Dorsolateral prefrontal cortex (tissue), 120 donors: ENCODE measurements at regions of chr13 and their contacts with region 1.

Region 1: DNA sequence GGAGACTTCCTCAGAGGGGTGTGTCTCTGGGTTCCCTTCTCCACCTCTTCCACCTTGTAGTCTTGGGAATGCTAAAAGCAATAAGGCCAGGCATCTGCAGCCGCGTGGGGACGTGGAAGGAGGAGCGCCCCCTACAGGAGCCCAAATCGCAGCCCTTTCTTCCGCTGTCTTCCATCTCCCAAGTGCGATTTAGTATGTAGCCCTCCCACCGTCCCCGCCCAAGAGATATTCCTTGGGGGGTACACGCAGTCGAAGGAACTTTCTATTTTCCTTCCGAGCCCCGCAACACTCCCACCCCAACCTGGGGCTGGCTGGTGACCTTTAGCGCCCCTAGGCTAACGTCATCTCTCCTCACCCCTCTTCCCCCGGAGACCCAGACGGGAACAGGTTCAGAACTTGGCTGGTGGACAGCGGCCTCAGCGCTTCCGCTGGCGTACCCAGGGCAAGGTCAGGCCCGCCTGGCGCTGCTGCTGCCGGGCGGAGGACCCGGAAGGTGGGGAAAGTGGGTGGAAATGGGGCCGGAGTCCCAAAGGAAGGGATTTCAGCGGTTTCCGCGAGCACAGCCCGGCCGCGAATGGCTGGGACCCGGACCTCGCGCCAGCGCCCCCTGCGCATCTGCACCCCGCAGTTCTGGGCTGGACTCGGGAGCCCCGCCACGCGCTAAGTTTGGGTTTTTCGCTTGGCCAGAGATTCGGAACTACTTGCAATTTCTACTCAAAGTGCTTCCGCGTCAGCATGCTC is 2.1 kb upstream of the PCDH8 start:
- DNase-seq: peak in 6 of 10 donors; percentile 42 to 79 (median 52)
- H3K4me3 ChIP-seq: peak overlapping the region; percentile 50 to 87 (median 66)
- H3K27ac ChIP-seq: peak overlapping the region in 53 of 59 donors; percentile 15 to 87 (median 68)
- H3K27me3 ChIP-seq: peaks cover 0 to 69% (median 45%) of the 10 kb centered on the region in 45 donors
- CTCF ChIP-seq: peak in 44 of 56 donors; percentile 11 to 49 (median 28)

Region 2: GRCh38 chr13:52421216-52421615 is 429.4 kb before region 1 on chr13:
- intact Hi-C with region 1: no loop called
- DNase-seq: no peak
- H3K4me3 ChIP-seq: no peak overlapping the region
- H3K27ac ChIP-seq: no peak overlapping the region
- H3K27me3 ChIP-seq: no peaks in the 10 kb centered on the region
- CTCF ChIP-seq: no peak

Region 3: GRCh38 chr13:52743988-52744387 is 106.6 kb before region 1 on chr13:
- intact Hi-C with region 1: loop called in 1 of 2 experiments (anchors 5 kb)
- DNase-seq: no peak
- H3K4me3 ChIP-seq: no peak overlapping the region
- H3K27ac ChIP-seq: no peak overlapping the region
- H3K27me3 ChIP-seq: peaks cover 0 to 13% (median 4%) of the 10 kb centered on the region in 45 donors
- CTCF ChIP-seq: peak in 47 of 56 donors; percentile 14 to 58 (median 41)

Region 4: DNA sequence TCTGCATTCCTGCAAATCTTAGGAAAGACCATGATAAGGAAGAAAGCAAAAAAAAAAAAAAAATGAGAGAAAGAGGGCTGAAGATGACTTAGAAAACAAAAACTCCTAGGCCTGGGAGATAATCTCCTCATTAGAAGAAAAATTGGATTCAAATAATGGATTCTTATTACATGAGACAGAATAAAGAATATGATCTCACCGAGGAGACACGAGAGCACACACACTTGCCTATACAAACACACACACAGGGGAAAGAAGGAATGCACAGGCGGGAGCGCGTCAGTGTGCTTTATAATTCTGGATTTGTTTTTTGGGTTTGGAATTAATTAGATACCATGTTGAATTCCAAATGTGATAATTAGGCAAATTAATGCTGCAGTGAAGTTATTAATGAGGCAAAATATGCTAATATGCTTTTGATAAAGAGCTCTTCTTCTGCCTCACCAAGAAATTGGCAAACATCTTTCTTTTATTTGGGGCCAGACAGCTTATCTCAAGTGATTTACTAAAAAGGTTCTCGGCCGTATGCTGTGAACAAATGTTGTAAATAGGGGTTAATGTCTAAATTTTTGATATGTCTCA is 34.0 kb after region 1 on chr13:
- intact Hi-C with region 1: no loop called
- DNase-seq: no peak
- H3K4me3 ChIP-seq: no peak overlapping the region
- H3K27ac ChIP-seq: no peak overlapping the region
- H3K27me3 ChIP-seq: peaks cover 0 to 4% (median 0%) of the 10 kb centered on the region in 45 donors
- CTCF ChIP-seq: no peak

Region 5: GRCh38 chr13:53068585-53069520 is 218.3 kb after region 1 on chr13:
- intact Hi-C with region 1: loop called (anchors 5 to 10 kb)
- DNase-seq: no peak
- H3K4me3 ChIP-seq: peak overlapping the region in 29 of 59 donors; percentile 4 to 54 (median 28)
- H3K27ac ChIP-seq: peak overlapping the region in 50 of 59 donors; percentile 3 to 87 (median 71)
- H3K27me3 ChIP-seq: no peaks in the 10 kb centered on the region
- CTCF ChIP-seq: peak in 44 of 56 donors; percentile 10 to 62 (median 42)

Region 6: DNA sequence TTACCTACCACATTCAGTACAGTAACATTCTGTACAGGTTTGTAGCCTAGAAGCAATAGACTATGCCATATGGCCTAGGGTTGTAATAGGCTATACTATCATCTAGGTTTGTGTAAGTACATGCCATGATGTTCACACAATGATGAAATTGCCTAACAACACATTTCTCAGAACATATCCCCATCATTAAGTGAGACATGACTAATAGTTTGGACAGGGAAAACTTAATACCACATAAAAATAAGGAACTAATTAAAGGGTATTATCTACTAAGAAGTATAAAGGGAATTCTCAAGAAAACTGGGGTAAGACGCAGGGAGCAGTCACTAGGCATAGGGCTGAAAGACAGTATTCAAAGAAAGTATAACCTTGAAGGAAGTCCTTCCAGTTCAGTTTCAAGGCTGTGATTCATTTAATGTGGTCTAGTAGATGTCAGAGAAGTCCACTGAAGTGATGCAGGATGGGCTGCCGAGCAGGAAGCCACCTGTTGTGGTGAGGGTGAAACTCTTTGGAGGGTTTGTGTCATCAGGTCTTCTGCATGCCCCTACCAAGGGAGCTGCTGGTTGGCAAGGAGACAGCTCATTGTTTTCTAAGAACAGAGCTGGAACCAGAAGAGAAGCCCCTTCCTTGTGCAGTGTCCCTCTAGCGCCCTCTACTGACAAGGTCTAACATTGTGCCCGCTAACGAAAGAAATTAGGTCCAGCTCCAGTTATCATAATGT is 300.9 kb after region 1 on chr13:
- intact Hi-C with region 1: loop called (anchors 2 to 10 kb)
- DNase-seq: peak in 2 of 10 donors; percentile 52 to 56
- H3K4me3 ChIP-seq: no peak overlapping the region
- H3K27ac ChIP-seq: no peak overlapping the region
- H3K27me3 ChIP-seq: peaks cover 0 to 10% (median 0%) of the 10 kb centered on the region in 45 donors
- CTCF ChIP-seq: peak; percentile 32 to 90 (median 75)